HAP-1 (cell line): ENCODE measurements at regions of chr14 and their contacts with region 1.

Region 1: DNA sequence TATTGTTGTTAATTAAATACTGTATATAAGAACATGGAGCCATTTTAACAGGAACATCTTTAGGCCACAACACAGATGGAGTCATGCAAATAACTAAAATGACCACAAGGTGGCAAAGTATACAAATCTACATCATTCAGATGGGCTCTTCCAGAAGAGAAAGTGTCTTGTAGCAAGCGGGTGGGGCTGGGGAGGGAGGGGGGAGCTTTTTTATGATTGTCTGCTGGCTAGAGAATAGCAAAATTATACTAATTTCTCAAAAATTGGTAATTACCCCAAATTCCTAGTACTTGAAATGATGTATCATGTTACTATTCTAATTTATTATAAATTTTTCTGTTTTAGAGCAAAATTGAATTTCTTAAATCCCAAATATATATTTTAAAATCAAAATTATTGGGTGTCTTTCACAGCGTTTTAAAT is 378.7 kb downstream of the PRKD1 start:
- DNase-seq: peak; percentile 8 to 63
- H3K4me3 ChIP-seq: no peak overlapping the region
- H3K4me1 ChIP-seq: no peaks in the 10 kb centered on the region
- H3K27me3 ChIP-seq: no peaks in the 10 kb centered on the region; the same call in 1 of the 2 replicates

Region 2: GRCh38 chr14:29724991-29725390 is 176.0 kb after region 1 on chr14:
- in situ Hi-C with region 1: no loop called
- DNase-seq: no peak
- H3K4me3 ChIP-seq: no peak overlapping the region
- H3K4me1 ChIP-seq: peaks cover 11% of the 10 kb centered on the region
- H3K27me3 ChIP-seq: no peaks in the 10 kb centered on the region

Region 3: GRCh38 chr14:30185832-30186231 is 636.9 kb after region 1 on chr14:
- in situ Hi-C with region 1: no loop called
- DNase-seq: no peak
- H3K4me3 ChIP-seq: no peak overlapping the region
- H3K4me1 ChIP-seq: peaks cover 6% of the 10 kb centered on the region; the same call in 1 of the 2 replicates
- H3K27me3 ChIP-seq: no peaks in the 10 kb centered on the region

Region 4: GRCh38 chr14:30214461-30215090 is 665.6 kb after region 1 on chr14:
- in situ Hi-C with region 1: loop called (anchors 25 kb)
- DNase-seq: peak; percentile 26 to 58
- H3K4me3 ChIP-seq: no peak overlapping the region
- H3K4me1 ChIP-seq: no peaks in the 10 kb centered on the region
- H3K27me3 ChIP-seq: no peaks in the 10 kb centered on the region; the same call in 1 of the 2 replicates